H1 (cell line): ENCODE measurements at regions of chr16 and their contacts with region 1.

Region 1: DNA sequence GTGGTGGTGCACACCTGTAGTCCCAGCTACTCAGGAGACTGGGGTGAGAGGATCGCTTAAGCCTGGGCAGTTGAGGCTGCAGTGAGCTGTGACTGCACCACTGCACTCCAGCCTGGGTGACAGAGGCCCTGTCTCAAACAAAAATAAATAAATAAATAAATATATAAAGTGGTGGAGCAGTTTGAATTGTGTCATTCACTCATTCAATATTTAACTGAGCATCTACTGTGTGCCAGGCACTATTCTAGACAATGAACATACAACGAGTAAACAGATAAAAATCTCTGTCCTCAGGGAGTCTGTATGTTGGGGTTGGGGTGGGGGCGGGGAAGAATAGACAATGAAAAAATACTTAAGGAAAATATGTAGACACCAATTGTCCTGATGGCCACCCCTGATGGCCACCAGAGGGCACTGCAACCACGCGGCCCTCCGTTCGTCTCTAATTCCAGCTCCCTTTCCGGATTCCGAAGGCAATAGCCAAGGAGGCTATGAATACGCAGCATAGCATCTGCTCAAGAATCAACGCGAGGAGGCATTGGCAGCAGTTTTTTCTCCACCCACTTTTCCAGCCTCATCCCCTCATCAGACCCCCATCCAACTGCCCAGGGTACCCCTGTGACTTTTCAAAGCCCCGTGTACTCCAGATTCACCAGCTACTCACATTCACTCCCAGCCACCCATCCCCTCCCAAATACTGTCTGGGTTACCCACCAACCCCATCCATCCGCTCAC is 21.4 kb downstream of the QPRT start:
- DNase-seq: peak in 1 of 2 experiments; percentile 84
- H3K4me3 ChIP-seq: peak overlapping the region in 1 of 4 experiments; percentile 35; a peak in 1 of 8 replicates
- H3K27ac ChIP-seq: no peak overlapping the region
- H3K4me1 ChIP-seq: peaks cover 0 to 11% (median 5%) of the 10 kb centered on the region in 4 experiments; a peak in 5 of 7 replicates
- H3K27me3 ChIP-seq: no peaks in the 10 kb centered on the region
- CTCF ChIP-seq: peak; percentile 86 to 90 (median 87)
- EP300 ChIP-seq: 0 out of 3 replicates have a peak, but pooled peaks of 1 of the 2 experiments have one; percentile 41
- POLR2A ChIP-seq: no peak
- RAD21 ChIP-seq: peak; percentile 92

Region 2: DNA sequence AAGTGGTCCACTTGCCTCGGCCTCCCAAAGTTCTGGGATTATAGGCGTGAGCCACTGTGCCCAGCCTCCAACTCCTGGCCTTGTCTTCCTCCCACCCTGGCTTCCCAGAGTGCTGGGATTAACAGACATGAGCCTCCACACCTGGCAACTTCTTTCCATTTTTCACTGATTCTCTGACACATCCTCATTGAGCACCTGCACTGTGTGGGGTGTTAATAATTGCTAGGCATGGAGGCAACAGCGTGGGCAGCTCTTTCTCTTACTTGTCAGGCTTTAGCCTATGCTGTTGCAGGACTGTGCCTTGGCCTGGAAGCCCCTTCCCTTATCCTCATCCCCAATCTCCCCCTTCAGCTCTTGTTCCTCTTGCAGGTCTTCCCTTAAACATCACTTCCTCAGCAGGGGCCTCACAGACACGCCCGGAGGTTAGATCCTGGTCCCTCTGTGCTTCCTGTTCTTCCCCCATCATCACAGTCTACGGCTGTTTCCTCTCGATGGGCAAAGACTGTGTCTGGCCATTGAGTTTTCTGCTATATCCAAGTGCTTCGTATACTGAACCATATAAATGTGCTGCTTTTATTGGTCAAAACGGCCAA is 13.6 kb before region 1 on chr16:
- CTCF ChIA-PET with region 1: interaction called, 17 read pairs
- POLR2A ChIA-PET with region 1: interaction called, 119 read pairs
- DNase-seq: no peak
- H3K4me3 ChIP-seq: no peak overlapping the region
- H3K27ac ChIP-seq: no peak overlapping the region
- H3K4me1 ChIP-seq: peaks cover 2 to 9% (median 5%) of the 10 kb centered on the region in 4 experiments; a peak in 5 of 7 replicates
- H3K27me3 ChIP-seq: no peaks in the 10 kb centered on the region
- CTCF ChIP-seq: no peak
- EP300 ChIP-seq: no peak
- POLR2A ChIP-seq: no peak
- RAD21 ChIP-seq: no peak

Region 3: GRCh38 chr16:29720699-29721098 is 20.3 kb after region 1 on chr16:
- CTCF ChIA-PET with region 1: interaction called, 138 read pairs
- POLR2A ChIA-PET with region 1: interaction called, 490 read pairs
- DNase-seq: no peak
- H3K4me3 ChIP-seq: no peak overlapping the region
- H3K27ac ChIP-seq: no peak overlapping the region
- H3K4me1 ChIP-seq: peaks cover 0 to 10% (median 4%) of the 10 kb centered on the region in 4 experiments; a peak in 5 of 7 replicates
- H3K27me3 ChIP-seq: no peaks in the 10 kb centered on the region
- CTCF ChIP-seq: no peak
- EP300 ChIP-seq: no peak
- POLR2A ChIP-seq: no peak
- RAD21 ChIP-seq: no peak

Region 4: GRCh38 chr16:29745853-29746345 is 45.5 kb after region 1 on chr16 and contains the start of gene C16orf54:
- CTCF ChIA-PET with region 1: interaction called, 4 read pairs
- POLR2A ChIA-PET with region 1: interaction called, 12 read pairs
- DNase-seq: peak in 1 of 2 experiments; percentile 65
- H3K4me3 ChIP-seq: no peak within 1 kb of the TSS
- H3K27ac ChIP-seq: no peak within 1 kb of the TSS
- H3K4me1 ChIP-seq: peaks cover 0 to 4% (median 2%) of the 10 kb centered on the region in 4 experiments; a peak in 4 of 7 replicates
- H3K27me3 ChIP-seq: no peaks in the 10 kb centered on the region
- CTCF ChIP-seq: no peak
- EP300 ChIP-seq: no peak
- POLR2A ChIP-seq: no peak
- RAD21 ChIP-seq: no peak
- total RNA-seq, gene C16orf54: not detected in 2 replicates

Region 5: GRCh38 chr16:29805378-29806098 is 105.1 kb after region 1 on chr16:
- CTCF ChIA-PET with region 1: interaction called, 9 read pairs
- POLR2A ChIA-PET with region 1: interaction called, 12 read pairs
- DNase-seq: peak; percentile 92 to 96
- H3K4me3 ChIP-seq: peak overlapping the region; percentile 54 to 79 (median 72)
- H3K27ac ChIP-seq: peak overlapping the region; percentile 86
- H3K4me1 ChIP-seq: peaks cover 0 to 35% (median 25%) of the 10 kb centered on the region in 4 experiments; a peak in 6 of 7 replicates
- H3K27me3 ChIP-seq: no peaks in the 10 kb centered on the region
- CTCF ChIP-seq: no peak
- EP300 ChIP-seq: 0 out of 3 replicates have a peak, but pooled peaks of 1 of the 2 experiments have one; percentile 6
- POLR2A ChIP-seq: peak in 1 of 2 experiments; percentile 76; a peak in 2 of 3 replicates
- RAD21 ChIP-seq: no peak; a peak in 1 of 4 replicates